Spleen (tissue), 13 donors: ENCODE measurements at regions of chr12 and their contacts with region 1.

Region 1: DNA sequence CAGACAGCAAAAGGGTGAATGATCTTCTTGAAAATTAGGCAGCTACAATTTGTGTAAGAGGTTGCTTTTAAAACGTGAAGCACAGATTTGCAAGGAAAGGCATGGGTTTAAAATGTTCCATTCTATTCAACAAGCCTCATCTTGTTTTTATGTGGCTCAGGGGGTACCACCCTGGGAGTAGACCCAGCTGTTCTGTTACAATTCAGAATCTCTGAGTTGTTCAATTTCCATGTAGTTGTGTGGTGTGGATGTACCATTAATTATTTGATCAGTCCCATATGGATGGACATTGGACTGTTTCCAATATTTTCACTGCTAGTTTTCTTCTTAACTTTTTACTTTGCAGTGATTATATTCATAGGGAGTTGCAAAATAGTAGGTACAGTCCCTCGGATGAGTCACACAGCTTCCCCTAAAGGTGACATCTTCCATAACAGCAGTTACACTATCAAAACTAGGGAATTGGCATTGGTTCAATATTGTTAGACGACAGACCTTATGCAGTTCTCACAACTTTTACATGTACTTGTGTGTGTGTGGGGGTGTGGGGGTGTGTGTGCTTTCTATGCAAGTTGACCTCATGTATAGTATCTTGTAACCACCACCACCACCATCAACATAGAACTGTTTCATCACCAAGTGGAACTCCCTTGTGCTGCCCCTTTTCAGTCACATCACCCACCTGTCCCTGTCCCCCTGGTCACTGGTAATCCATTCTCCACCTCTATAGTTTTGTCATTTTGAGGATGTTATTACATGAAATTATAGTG is 59.0 kb upstream of the CAPRIN2 start:
- DNase-seq: no peak
- H3K4me3 ChIP-seq: no peak overlapping the region
- H3K27ac ChIP-seq: no peak overlapping the region
- H3K4me1 ChIP-seq: no peaks in the 10 kb centered on the region
- H3K27me3 ChIP-seq: peaks cover 0 to 4% (median 0%) of the 10 kb centered on the region in 7 donors
- CTCF ChIP-seq: no peak
- POLR2A ChIP-seq: no peak

Region 2: DNA sequence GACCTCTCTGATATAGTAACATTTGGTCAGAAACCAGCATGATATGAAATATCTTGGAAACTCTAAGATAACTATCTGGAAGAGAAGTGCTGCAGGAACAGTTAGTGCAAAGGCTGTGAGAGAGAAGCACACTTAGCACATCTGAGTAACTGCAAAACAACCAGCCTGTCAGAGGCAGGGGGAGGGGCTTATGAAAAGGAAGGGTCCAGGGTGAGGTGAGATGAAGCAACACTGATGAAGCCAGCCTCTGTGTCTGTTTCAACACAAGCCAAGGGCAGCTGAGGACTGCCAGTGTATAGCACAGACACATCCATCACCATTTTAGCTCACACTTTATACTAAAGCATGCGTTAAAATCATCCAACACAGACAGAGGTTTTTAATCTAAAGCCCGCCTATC is 1278.8 kb before region 1 on chr12:
- intact Hi-C with region 1: loop called (anchors 10 kb)
- DNase-seq: no peak
- H3K4me3 ChIP-seq: no peak overlapping the region
- H3K27ac ChIP-seq: peak overlapping the region in 3 of 8 donors; percentile 10 to 16 (median 12)
- H3K4me1 ChIP-seq: peaks cover 0 to 15% (median 0%) of the 10 kb centered on the region in 6 donors
- H3K27me3 ChIP-seq: peaks cover 0 to 8% (median 0%) of the 10 kb centered on the region in 7 donors
- CTCF ChIP-seq: no peak
- POLR2A ChIP-seq: no peak

Region 3: DNA sequence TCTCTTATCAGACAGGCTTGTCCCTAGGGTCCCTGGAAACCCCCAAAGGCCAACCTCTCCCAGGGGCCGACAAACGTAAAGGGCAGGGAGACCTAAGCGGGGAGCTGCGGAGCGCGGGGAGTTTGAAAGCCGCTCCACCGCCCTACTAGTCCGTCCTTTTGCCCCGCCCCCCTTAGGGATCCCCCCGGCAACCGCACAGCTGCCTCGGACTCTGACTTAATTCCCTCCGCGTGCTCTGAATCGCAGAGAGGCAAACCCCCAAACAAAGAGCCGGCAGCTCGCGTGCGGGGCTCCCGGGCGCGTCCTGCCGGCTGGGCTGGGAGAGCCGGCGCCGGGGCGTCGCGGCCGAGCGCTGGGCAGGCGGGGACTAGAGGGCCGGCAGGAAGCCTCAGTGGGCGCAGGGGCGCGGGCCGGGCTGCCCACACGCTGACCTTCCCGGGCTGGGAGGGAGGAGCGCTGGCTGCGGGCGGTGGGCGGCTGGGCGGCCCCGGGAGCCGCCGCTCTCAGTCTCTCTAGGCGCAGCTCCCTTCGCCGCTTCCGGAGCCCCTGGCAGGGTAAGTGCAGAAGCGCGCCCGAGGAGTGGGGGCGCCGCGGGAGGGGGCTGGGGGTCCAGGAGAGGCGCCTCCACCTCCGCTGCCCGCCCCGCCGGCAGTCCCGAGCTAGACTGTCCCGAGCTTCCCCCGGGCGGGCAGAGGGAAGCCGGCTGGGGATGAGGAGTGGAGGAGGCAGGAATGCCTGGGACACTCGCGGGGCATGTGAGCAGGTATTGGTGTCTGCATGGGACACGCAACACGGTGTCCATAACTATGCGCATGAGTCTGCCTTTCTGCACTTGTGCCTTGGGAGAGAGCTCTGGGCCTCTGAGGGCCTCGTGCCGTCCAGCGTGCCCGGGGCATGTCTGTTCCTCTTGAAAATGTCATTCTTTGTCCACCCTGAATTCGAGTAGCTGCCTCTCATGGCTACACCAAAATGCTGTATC is 112.8 kb after region 1 on chr12 and contains the start of gene TSPAN11:
- intact Hi-C with region 1: no loop called
- DNase-seq: no peak
- H3K4me3 ChIP-seq: peak within 1 kb of the TSS in 7 of 8 donors; percentile 5 to 57 (median 16)
- H3K27ac ChIP-seq: peak within 1 kb of the TSS in 2 of 8 donors; percentile 37 to 66
- H3K4me1 ChIP-seq: peaks cover 0 to 49% (median 29%) of the 10 kb centered on the region in 6 donors
- H3K27me3 ChIP-seq: peaks cover 0 to 66% (median 19%) of the 10 kb centered on the region in 7 donors
- CTCF ChIP-seq: no peak
- POLR2A ChIP-seq: no peak
- total RNA-seq, gene TSPAN11: 0.26 to 4.1 (median 2.0) TPM